ENCODE measurements at regions of chr13 and their contacts with region 1.

Region 1: GRCh38 chr13:20424949-20425348 is 100.7 kb downstream of the CRYL1 start:
- DNase-seq: no peak
- ATAC-seq: no peak
- H3K4me3 ChIP-seq: no peak overlapping the region
- H3K27ac ChIP-seq: no peak overlapping the region
- H3K4me1 ChIP-seq: peaks cover 22% of the 10 kb centered on the region
- H3K27me3 ChIP-seq: no peaks in the 10 kb centered on the region
- CTCF ChIP-seq: no peak
- EP300 ChIP-seq: no peak
- POLR2A ChIP-seq: no peak
- RAD21 ChIP-seq: no peak

Region 2: GRCh38 chr13:20473139-20473538 is 48.2 kb after region 1 on chr13:
- CTCF ChIA-PET with region 1: interaction called, 3 read pairs
- POLR2A ChIA-PET with region 1: no interaction called
- RAD21 ChIA-PET with region 1: no interaction called
- SMC1A ChIA-PET with region 1: no interaction called
- in situ Hi-C with region 1: loop called (anchors 5 kb)
- intact Hi-C with region 1: no loop called
- DNase-seq: no peak
- ATAC-seq: no peak
- H3K4me3 ChIP-seq: no peak overlapping the region
- H3K27ac ChIP-seq: no peak overlapping the region
- H3K4me1 ChIP-seq: peaks cover 15% of the 10 kb centered on the region
- H3K27me3 ChIP-seq: no peaks in the 10 kb centered on the region
- CTCF ChIP-seq: no peak
- EP300 ChIP-seq: no peak
- POLR2A ChIP-seq: no peak
- RAD21 ChIP-seq: no peak

Region 3: GRCh38 chr13:20518660-20519100 is 93.7 kb after region 1 on chr13:
- CTCF ChIA-PET with region 1: no interaction called
- POLR2A ChIA-PET with region 1: no interaction called
- RAD21 ChIA-PET with region 1: no interaction called
- SMC1A ChIA-PET with region 1: no interaction called
- in situ Hi-C with region 1: no loop called
- intact Hi-C with region 1: no loop called
- DNase-seq: no peak
- ATAC-seq: no peak
- H3K4me3 ChIP-seq: no peak overlapping the region
- H3K27ac ChIP-seq: no peak overlapping the region
- H3K4me1 ChIP-seq: no peaks in the 10 kb centered on the region
- H3K27me3 ChIP-seq: no peaks in the 10 kb centered on the region
- CTCF ChIP-seq: no peak
- EP300 ChIP-seq: no peak
- POLR2A ChIP-seq: no peak
- RAD21 ChIP-seq: no peak